ENCODE measurements at regions of chr5 and their contacts with region 1.

Region 1: DNA sequence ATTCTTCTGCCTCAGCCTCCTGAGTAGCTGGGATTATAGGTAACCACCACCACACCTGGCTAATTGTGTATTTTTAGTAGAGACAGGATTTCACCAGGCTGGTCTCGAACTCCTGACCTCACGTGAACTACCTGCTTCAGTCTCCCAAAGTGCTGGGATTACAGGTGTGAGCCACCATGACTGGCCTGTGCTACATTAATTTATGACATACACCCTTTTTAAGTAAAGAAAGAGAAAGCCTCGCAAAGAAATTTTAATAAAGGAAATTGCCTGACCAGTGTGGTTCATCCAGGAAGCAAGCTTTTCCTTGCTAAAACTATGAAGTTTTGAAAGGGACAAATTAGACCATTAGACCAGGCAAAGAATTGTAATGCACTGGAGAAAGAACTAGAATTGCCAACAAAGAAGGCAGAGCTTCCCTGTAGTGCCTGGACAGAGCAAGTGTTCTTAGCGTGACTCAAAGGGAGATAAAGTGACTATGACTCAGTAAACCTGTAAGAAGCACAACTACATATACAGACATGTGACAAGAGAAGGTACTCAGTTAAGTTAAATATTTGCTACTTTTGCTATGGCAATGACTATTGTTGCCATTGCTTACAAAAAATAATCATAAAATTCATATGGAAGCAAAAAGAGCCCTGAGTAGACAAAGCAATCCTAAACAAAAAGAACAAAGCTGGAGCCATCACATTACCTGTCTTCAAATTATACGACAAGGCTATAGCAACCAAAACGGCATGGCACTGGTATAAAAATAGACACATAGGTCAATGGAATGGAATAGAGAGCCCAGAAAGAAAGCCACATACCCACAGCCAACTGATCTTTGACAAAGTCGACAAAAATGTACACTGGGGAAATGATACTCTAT is 54.6 kb downstream of the FYB1 start:
- DNase-seq: no peak
- ATAC-seq: peak; percentile 89
- H3K4me3 Mint-ChIP-seq: peak overlapping the region; percentile 67
- H3K27ac Mint-ChIP-seq: peak overlapping the region; percentile 96
- H3K4me1 Mint-ChIP-seq: peaks cover 89% of the 10 kb centered on the region
- H3K27me3 Mint-ChIP-seq: no peaks in the 10 kb centered on the region
- CTCF ChIP-seq: no peak

Region 2: DNA sequence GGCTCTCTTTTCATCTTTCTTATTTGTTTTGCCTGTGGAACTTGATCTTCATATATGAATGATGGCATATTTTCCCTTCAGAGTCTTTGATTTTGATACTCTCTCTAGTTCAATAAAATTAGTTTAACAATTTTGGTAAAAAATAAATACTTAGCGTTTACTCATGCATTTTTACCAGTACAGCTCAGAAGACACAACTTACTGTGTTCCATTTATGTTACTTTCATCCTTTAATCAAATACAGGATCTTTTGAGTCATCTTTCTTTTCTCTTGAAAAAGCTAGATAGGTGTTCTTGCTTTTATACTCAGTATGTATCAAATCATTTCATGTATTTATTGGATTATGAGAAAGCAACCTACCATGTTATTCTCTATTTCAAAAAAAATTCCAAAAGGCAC is 43.5 kb before region 1 on chr5:
- CTCF ChIA-PET with region 1: no interaction called
- POLR2A ChIA-PET with region 1: no interaction called
- intact Hi-C with region 1: no loop called
- DNase-seq: no peak
- ATAC-seq: no peak
- H3K4me3 Mint-ChIP-seq: no peak overlapping the region
- H3K27ac Mint-ChIP-seq: peak overlapping the region; percentile 59
- H3K4me1 Mint-ChIP-seq: peaks cover 47% of the 10 kb centered on the region
- H3K27me3 Mint-ChIP-seq: no peaks in the 10 kb centered on the region
- CTCF ChIP-seq: no peak

Region 3: GRCh38 chr5:39148983-39149534 is 15.7 kb before region 1 on chr5:
- CTCF ChIA-PET with region 1: interaction called, 3 read pairs
- POLR2A ChIA-PET with region 1: interaction called, 15 read pairs
- intact Hi-C with region 1: no loop called
- DNase-seq: no peak
- ATAC-seq: peak; percentile 45
- H3K4me3 Mint-ChIP-seq: no peak overlapping the region
- H3K27ac Mint-ChIP-seq: peak overlapping the region; percentile 90
- H3K4me1 Mint-ChIP-seq: peaks cover 68% of the 10 kb centered on the region
- H3K27me3 Mint-ChIP-seq: no peaks in the 10 kb centered on the region
- CTCF ChIP-seq: peak; percentile 62

Region 4: DNA sequence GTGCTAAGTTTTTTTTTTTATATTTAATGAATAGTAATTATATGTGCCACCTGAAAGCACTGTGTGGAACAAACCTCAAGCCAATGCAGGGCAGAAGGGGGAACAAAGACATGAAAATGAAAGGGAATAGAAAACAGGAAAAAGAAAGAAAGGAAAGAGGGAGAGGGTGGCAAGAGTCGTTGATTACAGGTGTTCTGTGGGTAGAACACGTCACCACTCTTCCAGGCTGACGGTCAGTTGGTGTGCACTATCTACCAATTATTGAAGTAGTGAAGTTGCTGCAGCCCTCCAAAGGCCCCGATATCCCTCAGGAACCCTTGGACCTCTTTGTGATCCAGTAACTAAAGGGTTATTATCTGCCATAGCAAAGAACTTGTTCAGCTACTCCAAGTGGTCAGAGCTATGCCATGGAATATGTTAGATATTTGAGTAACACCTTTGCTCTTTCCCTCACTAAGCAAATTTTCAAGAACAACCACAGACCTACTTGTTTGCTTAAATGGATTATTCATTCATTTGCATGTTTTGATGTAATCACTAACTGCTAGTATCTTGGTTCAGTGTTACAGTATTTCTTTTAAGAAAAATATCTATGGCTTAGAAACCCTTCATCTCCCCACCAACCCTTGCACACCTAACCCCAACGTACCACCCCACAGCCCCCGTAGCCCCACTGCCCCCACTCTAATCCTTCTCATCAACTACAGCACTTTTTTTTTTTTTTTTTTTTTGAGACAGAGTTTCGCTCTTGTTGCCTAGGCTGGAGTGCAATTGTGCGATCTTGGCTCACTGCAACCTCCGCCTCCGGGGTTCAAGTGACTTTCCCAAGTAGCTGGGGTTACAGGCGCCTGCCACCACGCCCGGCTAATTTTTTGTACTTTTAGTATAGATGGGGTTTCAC is 23.3 kb after region 1 on chr5:
- CTCF ChIA-PET with region 1: interaction called, 10 read pairs
- POLR2A ChIA-PET with region 1: interaction called, 202 read pairs
- intact Hi-C with region 1: no loop called
- DNase-seq: peak; percentile 51
- ATAC-seq: peak; percentile 44
- H3K4me3 Mint-ChIP-seq: peak overlapping the region; percentile 72
- H3K27ac Mint-ChIP-seq: peak overlapping the region; percentile 96
- H3K4me1 Mint-ChIP-seq: peaks cover 84% of the 10 kb centered on the region
- H3K27me3 Mint-ChIP-seq: no peaks in the 10 kb centered on the region
- CTCF ChIP-seq: no peak